ENCODE measurements at regions of chr12 and their contacts with region 1.

Region 1: GRCh38 chr12:108691175-108691997 is 39.9 kb downstream of the CORO1C start:
- DNase-seq: peak; percentile 96 to 100 (median 99)
- H3K4me3 ChIP-seq: peak overlapping the region in 1 of 4 donors; percentile 39
- H3K27ac ChIP-seq: peak overlapping the region; percentile 81 to 98 (median 88)
- H3K4me1 ChIP-seq: peaks cover 40 to 57% of the 10 kb centered on the region in 2 donors
- H3K27me3 ChIP-seq: no peaks in the 10 kb centered on the region
- CTCF ChIP-seq: peak in 5 of 6 experiments; percentile 52 to 86 (median 70)
- POLR2A ChIP-seq: peak in 1 of 2 donors; percentile 66

Region 2: GRCh38 chr12:108399514-108399913 is 291.9 kb before region 1 on chr12:
- intact Hi-C with region 1: no loop called
- DNase-seq: peak in 6 of 7 donors; percentile 8 to 61 (median 26)
- H3K4me3 ChIP-seq: no peak overlapping the region
- H3K27ac ChIP-seq: no peak overlapping the region
- H3K4me1 ChIP-seq: no peaks in the 10 kb centered on the region
- H3K27me3 ChIP-seq: no peaks in the 10 kb centered on the region
- CTCF ChIP-seq: no peak
- POLR2A ChIP-seq: no peak

Region 3: GRCh38 chr12:108731105-108731865 is 39.9 kb after region 1 on chr12 and contains the start of gene CORO1C:
- intact Hi-C with region 1: loop called in 1 of 2 experiments (anchors 5 kb)
- DNase-seq: peak; percentile 96 to 99 (median 98)
- H3K4me3 ChIP-seq: peak within 1 kb of the TSS; percentile 85 to 97 (median 92)
- H3K27ac ChIP-seq: peak within 1 kb of the TSS; percentile 93 to 97 (median 93)
- H3K4me1 ChIP-seq: peaks cover 0 to 25% of the 10 kb centered on the region in 2 donors
- H3K27me3 ChIP-seq: no peaks in the 10 kb centered on the region
- CTCF ChIP-seq: peak; percentile 55 to 97 (median 83)
- POLR2A ChIP-seq: peak; percentile 95 to 97
- total RNA-seq, gene CORO1C: 46.0 to 124 (median 84.2) TPM

Region 4: GRCh38 chr12:108948367-108948766 is 257.0 kb after region 1 on chr12:
- intact Hi-C with region 1: no loop called
- DNase-seq: no peak
- H3K4me3 ChIP-seq: no peak overlapping the region
- H3K27ac ChIP-seq: no peak overlapping the region
- H3K4me1 ChIP-seq: peaks cover 6 to 7% of the 10 kb centered on the region in 2 donors
- H3K27me3 ChIP-seq: no peaks in the 10 kb centered on the region
- CTCF ChIP-seq: no peak
- POLR2A ChIP-seq: no peak